Caco-2 (cell line): ENCODE measurements at regions of chr17 and their contacts with region 1.

Region 1: DNA sequence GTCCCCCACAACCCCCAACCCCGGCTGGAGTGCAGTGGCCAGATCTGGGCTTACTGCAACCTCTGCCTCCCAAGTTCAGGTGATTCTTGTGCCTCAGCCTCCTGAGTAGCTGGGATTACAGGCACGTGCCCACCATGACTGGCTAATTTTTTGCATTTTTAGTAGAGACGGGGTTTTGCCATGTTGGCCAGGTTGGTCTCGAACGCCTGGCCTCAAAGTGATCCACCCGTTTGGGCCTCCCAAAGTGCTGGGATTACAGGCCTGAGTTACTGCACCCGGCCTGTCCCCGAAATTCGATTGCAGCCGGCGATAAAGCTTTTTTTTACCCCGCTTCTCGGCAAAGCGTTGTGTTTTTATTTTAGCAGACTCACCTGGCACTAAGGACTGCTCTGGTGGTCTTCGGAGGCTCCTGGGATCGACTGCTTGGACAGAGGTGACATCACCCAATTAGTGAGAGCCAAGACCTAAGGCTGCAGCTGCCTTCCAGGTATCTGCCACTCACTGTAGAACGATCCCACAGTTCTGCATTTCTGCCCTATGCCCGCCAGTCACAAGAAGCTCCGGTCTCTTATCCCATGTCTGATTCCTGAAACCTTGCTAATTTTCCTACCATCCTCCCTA is 82.2 kb upstream of the ARL4D start:
- DNase-seq: no peak
- H3K4me3 ChIP-seq: no peak overlapping the region
- H3K4me3 Mint-ChIP-seq: no peak overlapping the region
- H3K27ac Mint-ChIP-seq: no peak overlapping the region
- H3K4me1 ChIP-seq: peaks cover 4% of the 10 kb centered on the region
- H3K4me1 Mint-ChIP-seq: peaks cover 7% of the 10 kb centered on the region
- H3K27me3 ChIP-seq: no peaks in the 10 kb centered on the region
- H3K27me3 Mint-ChIP-seq: no peaks in the 10 kb centered on the region
- CTCF ChIP-seq: no peak

Region 2: DNA sequence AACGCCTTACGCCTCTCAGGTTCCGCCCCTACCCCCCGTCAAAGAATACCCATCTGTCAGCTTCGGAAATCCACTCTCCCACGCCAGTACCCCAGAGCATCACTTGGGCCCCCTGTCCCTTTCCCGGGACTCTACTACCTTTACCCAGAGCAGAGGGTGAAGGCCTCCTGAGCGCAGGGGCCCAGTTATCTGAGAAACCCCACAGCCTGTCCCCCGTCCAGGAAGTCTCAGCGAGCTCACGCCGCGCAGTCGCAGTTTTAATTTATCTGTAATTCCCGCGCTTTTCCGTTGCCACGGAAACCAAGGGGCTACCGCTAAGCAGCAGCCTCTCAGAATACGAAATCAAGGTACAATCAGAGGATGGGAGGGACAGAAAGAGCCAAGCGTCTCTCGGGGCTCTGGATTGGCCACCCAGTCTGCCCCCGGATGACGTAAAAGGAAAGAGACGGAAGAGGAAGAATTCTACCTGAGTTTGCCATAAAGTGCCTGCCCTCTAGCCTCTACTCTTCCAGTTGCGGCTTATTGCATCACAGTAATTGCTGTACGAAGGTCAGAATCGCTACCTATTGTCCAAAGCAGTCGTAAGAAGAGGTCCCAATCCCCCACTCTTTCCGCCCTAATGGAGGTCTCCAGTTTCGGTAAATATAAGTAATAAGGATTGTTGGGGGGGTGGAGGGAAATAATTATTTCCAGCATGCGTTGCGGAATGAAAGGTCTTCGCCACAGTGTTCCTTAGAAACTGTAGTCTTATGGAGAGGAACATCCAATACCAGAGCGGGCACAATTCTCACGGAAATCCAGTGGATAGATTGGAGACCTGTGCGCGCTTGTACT is 191.3 kb before region 1 on chr17 and contains the start of gene BRCA1:
- CTCF ChIA-PET with region 1: no interaction called
- POLR2A ChIA-PET with region 1: interaction called, 8 read pairs
- intact Hi-C with region 1: loop called (anchors 2 kb)
- DNase-seq: peak; percentile 98 to 99
- H3K4me3 ChIP-seq: peak within 1 kb of the TSS; percentile 90
- H3K4me3 Mint-ChIP-seq: peak within 1 kb of the TSS; percentile 98
- H3K27ac Mint-ChIP-seq: peak within 1 kb of the TSS; percentile 99
- H3K4me1 ChIP-seq: peaks cover 18% of the 10 kb centered on the region
- H3K4me1 Mint-ChIP-seq: no peaks in the 10 kb centered on the region
- H3K27me3 ChIP-seq: no peaks in the 10 kb centered on the region
- H3K27me3 Mint-ChIP-seq: no peaks in the 10 kb centered on the region
- CTCF ChIP-seq: no peak
- total RNA-seq, gene BRCA1: 50.8 and 51.1 TPM in 2 replicates

Region 3: DNA sequence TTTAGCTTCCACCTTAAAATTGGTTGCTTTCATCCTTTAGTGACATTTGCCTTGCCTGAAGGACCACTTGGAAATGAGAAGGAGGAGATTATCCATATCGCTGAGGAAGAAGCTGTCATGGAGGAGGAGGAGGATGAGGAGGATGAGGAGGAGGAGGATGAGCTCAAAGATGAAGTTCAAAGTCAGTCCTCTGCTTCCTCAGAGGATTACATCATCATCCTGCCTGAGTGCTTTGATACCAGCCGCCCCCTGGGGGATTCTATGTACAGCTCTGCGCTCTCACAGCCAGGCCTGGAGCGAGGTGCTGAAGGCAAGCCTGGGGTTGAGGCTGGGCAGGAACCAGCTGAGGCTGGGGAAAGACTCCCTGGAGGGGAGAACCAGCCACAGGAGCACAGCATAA is 116.5 kb before region 1 on chr17:
- CTCF ChIA-PET with region 1: no interaction called
- POLR2A ChIA-PET with region 1: interaction called, 12 read pairs
- intact Hi-C with region 1: no loop called
- DNase-seq: no peak
- H3K4me3 ChIP-seq: no peak overlapping the region
- H3K4me3 Mint-ChIP-seq: no peak overlapping the region
- H3K27ac Mint-ChIP-seq: no peak overlapping the region
- H3K4me1 ChIP-seq: no peaks in the 10 kb centered on the region
- H3K4me1 Mint-ChIP-seq: no peaks in the 10 kb centered on the region
- H3K27me3 ChIP-seq: no peaks in the 10 kb centered on the region
- H3K27me3 Mint-ChIP-seq: no peaks in the 10 kb centered on the region
- CTCF ChIP-seq: no peak

Region 4: GRCh38 chr17:43360739-43361505 is 44.3 kb after region 1 on chr17:
- CTCF ChIA-PET with region 1: no interaction called
- POLR2A ChIA-PET with region 1: interaction called, 36 read pairs
- intact Hi-C with region 1: no loop called
- DNase-seq: peak; percentile 95 to 99
- H3K4me3 ChIP-seq: peak overlapping the region; percentile 36
- H3K4me3 Mint-ChIP-seq: peak overlapping the region; percentile 70
- H3K27ac Mint-ChIP-seq: peak overlapping the region; percentile 99
- H3K4me1 ChIP-seq: peaks cover 14% of the 10 kb centered on the region
- H3K4me1 Mint-ChIP-seq: peaks cover 31% of the 10 kb centered on the region
- H3K27me3 ChIP-seq: no peaks in the 10 kb centered on the region
- H3K27me3 Mint-ChIP-seq: peaks cover 2% of the 10 kb centered on the region
- CTCF ChIP-seq: no peak

Region 5: DNA sequence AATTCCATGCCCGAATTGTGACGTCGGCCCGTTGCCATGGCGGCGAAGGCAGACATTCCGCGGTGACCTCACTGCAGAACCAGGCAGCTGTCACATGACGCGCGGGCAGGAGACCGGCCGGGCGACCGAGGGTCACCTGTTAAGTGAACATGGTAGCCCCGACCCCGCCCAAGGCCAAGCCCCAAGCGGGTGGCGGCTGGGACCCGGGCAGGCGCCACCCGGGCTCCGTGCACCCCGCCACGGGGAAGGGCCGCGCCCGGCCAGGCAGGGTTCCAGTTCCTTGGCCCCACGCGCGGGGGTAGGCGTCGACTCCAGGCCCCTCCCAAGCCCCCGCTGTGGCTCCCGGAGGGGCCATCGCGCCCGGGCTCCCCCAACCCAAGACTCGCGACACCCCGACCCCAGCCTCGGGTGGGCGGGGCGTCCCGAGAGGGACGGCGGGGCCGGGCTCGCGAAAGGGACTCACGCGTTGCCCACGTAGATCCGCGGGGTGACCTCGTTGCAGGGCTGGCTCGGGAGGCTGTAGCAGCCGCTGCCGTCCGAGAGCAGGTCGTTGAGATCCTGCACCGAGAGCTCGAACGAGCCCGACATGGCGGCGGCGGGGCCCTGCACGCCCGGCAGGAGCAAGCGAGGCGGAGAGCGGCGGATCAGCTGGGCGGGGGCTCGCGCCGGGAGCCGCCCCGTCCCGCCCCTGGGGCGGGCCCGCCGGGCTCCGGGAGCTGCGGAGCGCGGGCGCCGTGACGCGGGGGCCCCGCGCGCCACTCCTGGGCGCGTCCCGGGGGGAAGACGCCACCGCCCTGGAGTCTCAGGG is 461.9 kb after region 1 on chr17 and contains the start of gene DUSP3:
- CTCF ChIA-PET with region 1: no interaction called
- POLR2A ChIA-PET with region 1: no interaction called
- intact Hi-C with region 1: loop called (anchors 5 kb)
- DNase-seq: peak; percentile 98
- H3K4me3 ChIP-seq: peak within 1 kb of the TSS; percentile 98
- H3K4me3 Mint-ChIP-seq: peak within 1 kb of the TSS; percentile 77
- H3K27ac Mint-ChIP-seq: peak within 1 kb of the TSS; percentile 97
- H3K4me1 ChIP-seq: peaks cover 28% of the 10 kb centered on the region
- H3K4me1 Mint-ChIP-seq: peaks cover 29% of the 10 kb centered on the region
- H3K27me3 ChIP-seq: no peaks in the 10 kb centered on the region
- H3K27me3 Mint-ChIP-seq: no peaks in the 10 kb centered on the region
- CTCF ChIP-seq: no peak
- total RNA-seq, gene DUSP3: 78.8 and 86.3 TPM in 2 replicates